H1 (cell line): ENCODE measurements at regions of chr5 and their contacts with region 1.

Region 1: GRCh38 chr5:79857714-79858409 is 133.2 kb downstream of the MTX3 start:
- DNase-seq: peak; percentile 41 to 94
- H3K4me3 ChIP-seq: no peak overlapping the region
- H3K27ac ChIP-seq: no peak overlapping the region
- H3K4me1 ChIP-seq: no peaks in the 10 kb centered on the region
- H3K27me3 ChIP-seq: no peaks in the 10 kb centered on the region
- CTCF ChIP-seq: peak; percentile 81 to 99 (median 83)
- EP300 ChIP-seq: no peak
- POLR2A ChIP-seq: no peak
- RAD21 ChIP-seq: peak; percentile 82 to 87

Region 2: DNA sequence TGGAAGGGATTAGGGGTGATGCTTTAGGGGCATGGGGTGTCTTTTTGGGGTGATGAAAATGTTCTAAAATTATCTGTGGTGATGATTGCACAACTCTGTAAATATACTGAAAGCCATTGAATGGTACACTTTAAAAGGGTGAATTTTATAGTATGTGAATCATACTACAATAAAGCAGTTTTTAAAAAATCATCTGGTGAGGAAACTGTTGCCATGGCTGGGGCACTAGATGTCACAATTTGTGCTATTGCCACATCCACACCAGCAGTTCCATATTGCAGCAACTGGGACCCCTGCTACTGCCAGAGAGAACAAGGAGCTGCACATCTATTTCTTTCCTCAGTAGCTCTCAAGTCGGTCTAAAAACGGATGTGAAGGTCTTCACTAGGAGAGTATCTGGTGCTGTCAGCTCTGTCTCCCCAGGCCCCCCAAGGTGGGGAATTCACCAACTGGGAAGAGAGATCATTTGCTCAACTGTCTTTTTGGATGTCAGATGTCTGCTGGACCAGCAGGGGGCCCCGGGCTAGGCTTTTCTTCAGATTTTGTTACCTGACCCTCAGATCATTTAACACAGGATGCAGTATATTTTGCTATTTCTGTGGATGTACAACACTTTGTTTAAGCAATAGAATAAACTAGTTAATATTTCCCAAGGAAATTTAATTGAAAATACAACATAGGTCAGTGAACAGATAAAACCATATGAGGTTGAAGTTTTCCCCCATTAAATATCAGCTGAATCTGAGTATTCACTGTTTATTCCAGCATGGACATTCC is 155.1 kb before region 1 on chr5:
- CTCF ChIA-PET with region 1: interaction called, 11 read pairs
- POLR2A ChIA-PET with region 1: no interaction called
- DNase-seq: peak in 1 of 2 experiments; percentile 60
- H3K4me3 ChIP-seq: no peak overlapping the region
- H3K27ac ChIP-seq: no peak overlapping the region
- H3K4me1 ChIP-seq: peaks cover 0 to 3% (median 0%) of the 10 kb centered on the region in 4 experiments; a peak in 1 of 7 replicates
- H3K27me3 ChIP-seq: no peaks in the 10 kb centered on the region
- CTCF ChIP-seq: peak; percentile 47 to 55 (median 55)
- EP300 ChIP-seq: no peak
- POLR2A ChIP-seq: no peak
- RAD21 ChIP-seq: peak; percentile 33 to 56; a peak in 3 of 4 replicates

Region 3: DNA sequence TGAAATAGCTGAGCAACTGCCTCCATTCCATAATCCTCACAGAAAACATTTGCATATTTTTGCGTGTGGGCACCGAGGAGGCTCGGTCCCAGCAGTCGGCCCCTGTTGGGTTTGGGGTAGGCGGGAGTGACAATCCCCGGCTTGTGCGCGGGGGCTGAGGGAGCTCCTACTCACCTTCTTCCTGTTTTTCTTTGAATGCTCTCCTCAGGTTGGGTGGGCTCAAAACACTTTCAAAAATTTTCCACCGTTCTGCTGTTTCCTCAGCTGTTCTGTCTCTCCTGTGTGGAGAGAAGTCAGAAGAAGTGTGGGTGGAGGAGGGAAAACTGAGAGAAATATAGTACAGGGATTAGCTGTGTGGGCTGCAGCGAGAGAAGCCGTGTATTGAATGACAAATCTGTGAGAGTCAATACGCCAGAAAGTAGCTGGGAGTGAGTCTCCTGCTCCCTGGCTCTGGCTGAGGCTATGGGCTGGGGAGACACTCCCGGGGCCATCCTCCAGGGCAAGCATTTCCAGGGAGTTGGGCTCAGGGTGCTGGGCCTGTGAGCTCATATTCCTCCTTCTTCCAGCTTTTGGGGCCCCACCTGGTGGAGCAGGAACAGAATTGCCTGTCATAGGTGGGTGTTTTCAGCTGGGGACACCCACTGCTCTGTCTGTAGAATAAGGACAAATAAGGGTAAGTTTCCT is 83.5 kb before region 1 on chr5:
- CTCF ChIA-PET with region 1: interaction called, 10 read pairs
- POLR2A ChIA-PET with region 1: no interaction called
- DNase-seq: peak; percentile 76 to 83
- H3K4me3 ChIP-seq: no peak overlapping the region
- H3K27ac ChIP-seq: no peak overlapping the region
- H3K4me1 ChIP-seq: peaks cover 0 to 4% (median 0%) of the 10 kb centered on the region in 4 experiments; a peak in 3 of 7 replicates
- H3K27me3 ChIP-seq: no peaks in the 10 kb centered on the region
- CTCF ChIP-seq: peak; percentile 62 to 91 (median 81)
- EP300 ChIP-seq: no peak
- POLR2A ChIP-seq: no peak
- RAD21 ChIP-seq: peak; percentile 80 to 87

Region 4: DNA sequence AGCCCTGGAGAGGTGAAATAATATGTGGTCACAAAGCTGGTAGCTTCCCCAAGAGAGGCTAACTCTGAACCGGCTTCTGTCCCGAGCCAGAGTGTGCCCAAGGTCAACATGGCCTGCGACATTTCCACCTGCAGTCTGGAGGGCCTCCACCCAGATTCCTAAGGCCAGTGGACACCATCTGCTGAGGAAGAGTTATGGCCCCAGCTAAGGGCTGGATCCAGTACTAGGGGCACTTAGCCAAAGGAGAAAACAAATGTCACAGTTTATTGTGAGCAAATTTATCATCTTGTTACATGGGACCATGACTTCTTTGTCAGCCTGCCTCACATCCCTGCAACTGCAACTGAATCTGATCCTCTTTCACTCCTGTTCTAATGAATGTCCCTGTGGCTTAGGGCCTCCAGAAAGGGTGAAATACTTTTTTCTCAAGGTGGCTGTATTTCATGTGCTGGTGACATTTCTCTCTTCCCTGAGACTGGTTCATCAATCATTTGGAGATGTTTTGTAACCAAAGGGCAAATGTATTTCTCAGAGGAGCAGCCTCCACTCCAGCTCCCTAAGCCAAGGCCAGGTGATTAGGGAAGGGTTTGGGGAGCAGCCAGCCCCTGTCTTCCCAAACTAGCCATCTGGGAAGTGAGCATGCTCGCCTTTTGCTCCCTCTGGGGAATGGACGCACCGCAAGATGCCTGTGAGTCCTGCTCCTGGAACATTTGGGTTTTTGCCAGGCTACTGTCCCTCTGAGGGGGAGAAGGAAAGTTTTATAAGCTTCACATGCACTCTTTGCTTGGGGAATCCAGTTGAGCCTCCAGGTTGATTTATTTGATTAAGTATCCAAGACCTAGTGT is 19.9 kb before region 1 on chr5:
- CTCF ChIA-PET with region 1: interaction called, 25 read pairs
- POLR2A ChIA-PET with region 1: no interaction called
- DNase-seq: peak in 1 of 2 experiments; percentile 28
- H3K4me3 ChIP-seq: no peak overlapping the region
- H3K27ac ChIP-seq: no peak overlapping the region
- H3K4me1 ChIP-seq: no peaks in the 10 kb centered on the region; a peak in 1 of 7 replicates
- H3K27me3 ChIP-seq: no peaks in the 10 kb centered on the region
- CTCF ChIP-seq: no peak
- EP300 ChIP-seq: no peak
- POLR2A ChIP-seq: no peak
- RAD21 ChIP-seq: no peak

Region 5: GRCh38 chr5:79845448-79846197 is 12.2 kb before region 1 on chr5:
- CTCF ChIA-PET with region 1: interaction called, 25 read pairs
- POLR2A ChIA-PET with region 1: no interaction called
- DNase-seq: peak in 1 of 2 experiments; percentile 20
- H3K4me3 ChIP-seq: no peak overlapping the region
- H3K27ac ChIP-seq: no peak overlapping the region
- H3K4me1 ChIP-seq: no peaks in the 10 kb centered on the region
- H3K27me3 ChIP-seq: no peaks in the 10 kb centered on the region
- CTCF ChIP-seq: no peak
- EP300 ChIP-seq: no peak
- POLR2A ChIP-seq: no peak
- RAD21 ChIP-seq: no peak

Region 6: GRCh38 chr5:79898611-79899010 is 40.7 kb after region 1 on chr5:
- CTCF ChIA-PET with region 1: no interaction called
- POLR2A ChIA-PET with region 1: no interaction called
- DNase-seq: no peak
- H3K4me3 ChIP-seq: no peak overlapping the region
- H3K27ac ChIP-seq: no peak overlapping the region
- H3K4me1 ChIP-seq: no peaks in the 10 kb centered on the region
- H3K27me3 ChIP-seq: no peaks in the 10 kb centered on the region
- CTCF ChIP-seq: no peak
- EP300 ChIP-seq: no peak
- POLR2A ChIP-seq: no peak
- RAD21 ChIP-seq: no peak

Region 7: DNA sequence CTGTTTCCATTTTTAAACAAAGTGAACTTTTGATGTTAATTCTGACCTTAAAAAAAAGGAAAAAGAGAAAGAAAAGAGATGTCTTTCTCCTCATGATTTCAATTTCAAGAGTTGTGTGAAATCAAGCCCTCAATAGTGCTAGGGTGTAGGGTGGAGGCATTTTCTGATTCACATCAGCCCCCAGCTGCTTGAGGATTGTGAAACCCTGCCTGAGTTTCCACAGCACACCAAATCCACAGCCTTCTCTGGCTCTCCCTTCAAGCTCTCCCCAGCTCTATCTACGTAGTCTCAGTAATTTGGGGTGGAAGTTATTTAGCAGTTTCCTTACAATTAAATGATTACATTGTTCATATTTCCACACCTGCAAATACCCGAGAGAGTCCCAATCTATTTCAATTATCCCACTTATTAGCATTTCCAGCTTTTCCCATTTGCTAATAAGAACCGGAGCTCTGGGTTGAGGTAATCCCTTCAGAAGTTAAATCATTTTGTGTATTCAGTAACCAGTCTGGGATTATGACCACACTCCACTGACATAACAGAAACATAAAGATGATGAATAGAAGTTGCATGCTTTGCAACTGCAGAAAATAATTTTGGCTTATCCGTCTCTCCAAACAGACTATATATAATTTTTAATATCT is 78.3 kb after region 1 on chr5:
- CTCF ChIA-PET with region 1: no interaction called
- POLR2A ChIA-PET with region 1: no interaction called
- DNase-seq: no peak
- H3K4me3 ChIP-seq: no peak overlapping the region
- H3K27ac ChIP-seq: no peak overlapping the region
- H3K4me1 ChIP-seq: no peaks in the 10 kb centered on the region
- H3K27me3 ChIP-seq: no peaks in the 10 kb centered on the region
- CTCF ChIP-seq: no peak
- EP300 ChIP-seq: no peak
- POLR2A ChIP-seq: no peak
- RAD21 ChIP-seq: no peak